G401 (cell line): ENCODE measurements at regions of chr19 and their contacts with region 1.

Region 1: DNA sequence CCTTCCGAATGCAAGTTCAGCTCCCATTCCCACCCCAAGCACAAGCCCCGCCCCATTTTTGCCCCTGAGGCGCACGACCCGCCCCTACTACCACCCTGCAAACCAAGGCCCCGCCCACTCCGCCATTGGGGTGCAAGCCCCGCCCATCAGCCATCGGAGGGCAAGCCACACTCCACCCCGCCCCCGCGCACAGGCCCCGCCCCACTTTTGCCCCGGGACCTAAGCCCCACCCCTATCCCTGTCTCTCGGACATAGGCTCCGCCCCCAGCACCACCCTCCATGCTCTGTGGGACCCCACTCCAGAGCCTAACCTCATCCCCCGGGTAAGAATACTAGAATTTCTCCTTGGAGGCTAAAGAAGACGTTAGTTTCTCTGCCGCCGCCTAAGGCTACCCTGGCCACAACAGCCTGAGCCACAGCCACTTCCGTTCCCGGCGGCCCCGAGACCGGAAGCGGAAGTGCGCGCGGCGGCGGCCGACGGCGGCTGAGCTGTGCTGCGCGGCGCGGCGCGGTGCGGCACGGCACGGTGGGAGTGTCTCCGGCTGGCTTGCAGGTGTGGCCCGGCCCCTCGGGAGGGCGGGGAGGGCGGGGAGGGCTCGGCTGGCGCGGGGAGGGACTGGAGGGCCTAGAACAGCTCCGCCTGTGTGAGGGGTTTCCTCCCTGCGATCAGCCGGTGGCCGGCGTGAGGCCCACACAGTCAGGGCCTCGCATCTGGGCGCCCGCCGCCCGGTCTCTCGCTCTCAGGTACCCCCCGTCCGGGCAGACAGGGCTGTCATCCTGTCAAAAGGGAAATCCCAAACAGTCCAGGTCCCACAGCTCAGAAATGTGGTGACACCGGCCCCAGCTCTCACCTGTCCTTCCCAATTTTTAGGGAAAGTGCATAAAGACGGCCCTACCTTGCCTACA is at the start of gene ZNF333:
- DNase-seq: peak; percentile 91
- total RNA-seq, gene ZNF333: 8.8 and 9.8 TPM in 2 replicates

Region 2: DNA sequence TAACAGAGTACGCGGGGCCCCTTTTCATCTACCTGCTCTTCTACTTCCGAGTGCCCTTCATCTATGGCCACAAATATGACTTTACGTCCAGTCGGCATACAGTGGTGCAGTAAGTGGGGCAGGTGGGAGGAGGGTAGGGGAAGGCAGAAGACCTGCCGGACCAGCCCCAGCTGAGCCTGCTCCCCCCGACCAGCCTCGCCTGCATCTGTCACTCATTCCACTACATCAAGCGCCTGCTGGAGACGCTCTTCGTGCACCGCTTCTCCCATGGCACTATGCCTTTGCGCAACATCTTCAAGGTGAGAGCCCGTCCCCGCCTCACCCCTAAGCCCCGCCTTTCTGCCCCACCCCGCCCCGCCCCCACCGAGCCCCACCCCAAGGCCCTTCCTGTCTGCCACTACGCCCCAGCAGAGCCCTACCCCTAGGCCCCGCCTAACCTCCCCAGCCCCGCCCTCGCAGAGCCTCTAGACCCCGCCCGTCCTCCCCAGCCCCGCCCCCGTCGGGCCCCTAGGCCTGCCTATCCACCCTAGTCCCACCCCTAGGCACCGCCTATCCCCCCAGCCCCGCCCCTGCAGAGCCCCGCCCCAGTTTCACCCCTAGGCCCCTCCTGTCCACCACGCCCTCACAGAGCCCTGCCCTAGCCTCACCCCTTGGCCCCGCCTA is 125.7 kb before region 1 on chr19:
- in situ Hi-C with region 1: loop called (anchors 10 kb)
- DNase-seq: peak; percentile 23

Region 3: DNA sequence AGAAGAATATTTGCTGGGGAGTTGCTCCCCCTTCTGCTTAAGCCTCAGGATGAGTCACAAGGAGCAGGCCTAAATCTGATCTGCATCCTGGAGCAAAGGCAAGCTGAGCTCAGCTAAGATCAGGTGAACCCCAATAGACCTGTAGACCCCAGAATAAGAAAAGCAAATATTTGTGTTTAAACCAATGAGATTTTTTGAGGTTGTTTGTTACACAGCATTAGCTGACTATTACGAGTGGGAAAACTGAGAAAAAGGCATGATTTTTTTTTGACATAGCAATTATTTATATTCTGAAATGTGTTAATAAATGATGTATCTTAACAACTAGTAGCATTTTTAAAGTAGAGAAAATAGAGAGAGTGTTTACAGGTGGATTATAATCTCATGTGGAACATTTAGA is 60.3 kb before region 1 on chr19:
- in situ Hi-C with region 1: no loop called
- DNase-seq: no peak